GM12878 (cell line): ENCODE measurements at regions of chr2 and their contacts with region 1.

Region 1: DNA sequence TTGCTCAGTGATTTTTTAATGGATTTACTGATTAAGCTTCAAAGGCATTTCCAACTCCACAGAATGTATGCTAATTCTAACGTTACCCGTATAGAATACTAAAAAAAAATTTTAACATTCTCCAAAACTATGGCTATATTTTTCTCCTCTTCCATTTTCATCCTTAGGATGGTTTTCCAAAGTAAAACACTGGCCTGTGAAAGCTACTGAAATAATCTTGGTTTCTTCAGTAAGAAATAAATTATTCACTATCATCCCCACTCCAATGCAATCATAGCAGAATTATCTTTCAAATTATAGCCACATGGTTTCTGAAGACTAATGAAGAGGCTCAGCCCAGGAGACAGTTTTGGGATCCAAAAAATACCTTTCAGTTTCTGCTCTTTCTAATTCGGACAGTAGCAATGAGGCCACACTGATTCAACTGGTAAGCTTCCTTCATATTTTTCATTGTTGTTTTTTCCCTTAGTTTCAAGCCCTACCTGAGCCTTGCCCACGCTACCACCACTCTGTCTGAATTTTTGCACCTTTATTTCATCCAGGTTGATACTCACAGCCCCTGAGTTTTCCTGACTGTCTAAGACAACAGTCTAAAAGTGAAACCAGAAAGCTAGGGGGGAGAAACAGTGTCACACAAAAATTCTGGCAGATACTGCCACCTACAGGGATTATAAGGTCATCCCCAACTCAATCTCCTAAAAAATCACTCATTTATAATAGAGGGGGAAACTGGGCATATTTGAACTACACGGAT is 887.9 kb downstream of the NRXN1 start:
- DNase-seq: peak; percentile 24
- ATAC-seq: peak; percentile 99
- H3K4me3 ChIP-seq: peak overlapping the region; percentile 69
- H3K27ac ChIP-seq: peak overlapping the region; percentile 33; the same call in 1 of the 2 replicates
- H3K4me1 ChIP-seq: no peaks in the 10 kb centered on the region
- H3K27me3 ChIP-seq: no peaks in the 10 kb centered on the region
- CTCF ChIP-seq: peak; percentile 54 to 68 (median 55); a peak in 5 of 6 replicates
- EP300 ChIP-seq: no peak
- POLR2A ChIP-seq: no peak
- RAD21 ChIP-seq: peak; percentile 69

Region 2: GRCh38 chr2:48600204-48600813 is 1543.7 kb before region 1 on chr2:
- CTCF ChIA-PET with region 1: interaction called, 3 read pairs
- POLR2A ChIA-PET with region 1: no interaction called
- RAD21 ChIA-PET with region 1: interaction called, 3 read pairs
- SMC1A ChIA-PET with region 1: no interaction called
- in situ Hi-C with region 1: no loop called
- intact Hi-C with region 1: loop called (anchors 5 kb)
- DNase-seq: no peak
- ATAC-seq: peak; percentile 77
- H3K4me3 ChIP-seq: no peak overlapping the region
- H3K27ac ChIP-seq: no peak overlapping the region
- H3K4me1 ChIP-seq: no peaks in the 10 kb centered on the region
- H3K27me3 ChIP-seq: peaks cover 0 to 2% of the 10 kb centered on the region in 2 experiments; a peak in 1 of 4 replicates
- CTCF ChIP-seq: peak; percentile 61 to 70 (median 68)
- EP300 ChIP-seq: no peak
- POLR2A ChIP-seq: no peak
- RAD21 ChIP-seq: peak; percentile 81

Region 3: DNA sequence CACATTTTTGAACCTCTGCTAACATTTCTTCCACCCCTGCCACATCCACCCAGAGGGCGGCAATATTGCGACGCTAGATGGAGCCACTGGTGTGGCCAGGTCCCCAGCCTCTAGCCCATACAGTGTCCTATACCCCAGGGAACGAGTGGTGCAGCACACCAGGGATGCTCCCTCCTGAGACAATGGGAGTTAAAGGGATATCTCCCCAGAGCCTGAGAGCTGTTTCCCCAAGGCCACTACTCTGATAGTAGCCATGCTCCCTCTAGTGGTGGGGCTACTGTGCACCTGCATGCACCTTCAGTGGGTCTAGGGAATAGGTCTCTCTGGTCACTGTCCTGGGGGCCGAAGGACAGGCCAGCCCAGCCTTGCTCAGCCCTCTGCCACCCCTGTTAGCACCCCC is 653.3 kb before region 1 on chr2:
- CTCF ChIA-PET with region 1: interaction called, 3 read pairs
- POLR2A ChIA-PET with region 1: no interaction called
- RAD21 ChIA-PET with region 1: no interaction called
- SMC1A ChIA-PET with region 1: no interaction called
- in situ Hi-C with region 1: no loop called
- intact Hi-C with region 1: loop called (anchors 5 kb)
- DNase-seq: no peak
- ATAC-seq: peak; percentile 96
- H3K4me3 ChIP-seq: no peak overlapping the region
- H3K27ac ChIP-seq: no peak overlapping the region
- H3K4me1 ChIP-seq: no peaks in the 10 kb centered on the region
- H3K27me3 ChIP-seq: no peaks in the 10 kb centered on the region
- CTCF ChIP-seq: peak; percentile 57 to 84 (median 61)
- EP300 ChIP-seq: no peak
- POLR2A ChIP-seq: no peak
- RAD21 ChIP-seq: peak; percentile 47

Region 4: GRCh38 chr2:49687918-49688317 is 456.1 kb before region 1 on chr2:
- CTCF ChIA-PET with region 1: interaction called, 15 read pairs
- POLR2A ChIA-PET with region 1: no interaction called
- RAD21 ChIA-PET with region 1: interaction called, 9 read pairs
- SMC1A ChIA-PET with region 1: interaction called, 6 read pairs
- in situ Hi-C with region 1: no loop called
- intact Hi-C with region 1: loop called (anchors 1 kb)
- DNase-seq: no peak
- ATAC-seq: peak; percentile 50; the same call in 2 of the 3 replicates
- H3K4me3 ChIP-seq: no peak overlapping the region
- H3K27ac ChIP-seq: no peak overlapping the region
- H3K4me1 ChIP-seq: no peaks in the 10 kb centered on the region
- H3K27me3 ChIP-seq: no peaks in the 10 kb centered on the region
- CTCF ChIP-seq: peak in 2 of 3 experiments; percentile 2 to 11; a peak in 2 of 6 replicates
- EP300 ChIP-seq: no peak
- POLR2A ChIP-seq: no peak
- RAD21 ChIP-seq: no peak

Region 5: DNA sequence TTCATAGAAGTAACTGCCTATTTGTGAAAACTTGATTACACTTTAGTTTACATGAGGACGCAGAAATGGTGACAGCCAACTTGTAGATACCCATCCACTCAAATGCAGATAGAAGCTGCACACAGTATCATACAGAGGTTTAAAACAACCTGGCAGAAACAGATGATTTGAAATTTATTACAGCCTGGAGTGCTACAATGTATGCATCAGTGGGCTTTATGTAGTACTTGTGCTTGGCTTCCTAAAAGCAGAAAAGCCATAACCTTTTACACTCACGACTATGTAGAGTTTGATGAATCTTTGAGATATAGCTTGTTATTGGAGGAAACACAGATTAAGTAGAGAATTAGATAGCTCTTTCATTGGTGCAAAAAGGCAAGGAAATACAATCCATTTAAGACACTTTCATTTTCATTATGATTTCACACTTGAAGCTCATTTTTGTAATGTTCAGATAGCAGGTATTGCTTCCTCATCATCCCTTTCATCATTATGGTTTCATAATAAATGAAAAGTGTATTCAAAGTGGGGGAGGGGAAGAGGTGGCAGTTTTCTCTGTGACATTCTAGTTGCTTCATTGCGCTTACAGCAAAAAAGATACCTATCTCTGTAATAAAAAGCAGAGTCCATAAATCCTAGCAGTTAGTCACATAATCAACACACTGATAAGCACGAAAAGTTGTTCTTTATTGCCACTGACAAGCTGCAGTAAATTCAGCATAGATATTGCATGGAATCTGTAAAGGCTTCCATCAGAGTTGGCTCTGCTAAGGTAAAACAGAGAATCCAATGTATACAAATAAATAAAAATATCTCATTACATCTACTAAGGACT is 199.8 kb before region 1 on chr2:
- CTCF ChIA-PET with region 1: no interaction called
- POLR2A ChIA-PET with region 1: no interaction called
- RAD21 ChIA-PET with region 1: no interaction called
- SMC1A ChIA-PET with region 1: no interaction called
- in situ Hi-C with region 1: no loop called
- intact Hi-C with region 1: no loop called
- DNase-seq: no peak
- ATAC-seq: peak; percentile 56
- H3K4me3 ChIP-seq: no peak overlapping the region
- H3K27ac ChIP-seq: no peak overlapping the region
- H3K4me1 ChIP-seq: no peaks in the 10 kb centered on the region
- H3K27me3 ChIP-seq: no peaks in the 10 kb centered on the region
- CTCF ChIP-seq: no peak
- EP300 ChIP-seq: no peak
- POLR2A ChIP-seq: no peak
- RAD21 ChIP-seq: no peak

Region 6: GRCh38 chr2:50401772-50402653 is 258.0 kb after region 1 on chr2:
- CTCF ChIA-PET with region 1: interaction called, 11 read pairs
- POLR2A ChIA-PET with region 1: no interaction called
- RAD21 ChIA-PET with region 1: interaction called, 12 read pairs
- SMC1A ChIA-PET with region 1: interaction called, 12 read pairs
- in situ Hi-C with region 1: no loop called
- intact Hi-C with region 1: no loop called
- DNase-seq: no peak
- ATAC-seq: peak; percentile 80
- H3K4me3 ChIP-seq: no peak overlapping the region
- H3K27ac ChIP-seq: no peak overlapping the region
- H3K4me1 ChIP-seq: no peaks in the 10 kb centered on the region
- H3K27me3 ChIP-seq: no peaks in the 10 kb centered on the region
- CTCF ChIP-seq: peak; percentile 80 to 90 (median 86)
- EP300 ChIP-seq: no peak
- POLR2A ChIP-seq: no peak
- RAD21 ChIP-seq: peak; percentile 85

Region 7: DNA sequence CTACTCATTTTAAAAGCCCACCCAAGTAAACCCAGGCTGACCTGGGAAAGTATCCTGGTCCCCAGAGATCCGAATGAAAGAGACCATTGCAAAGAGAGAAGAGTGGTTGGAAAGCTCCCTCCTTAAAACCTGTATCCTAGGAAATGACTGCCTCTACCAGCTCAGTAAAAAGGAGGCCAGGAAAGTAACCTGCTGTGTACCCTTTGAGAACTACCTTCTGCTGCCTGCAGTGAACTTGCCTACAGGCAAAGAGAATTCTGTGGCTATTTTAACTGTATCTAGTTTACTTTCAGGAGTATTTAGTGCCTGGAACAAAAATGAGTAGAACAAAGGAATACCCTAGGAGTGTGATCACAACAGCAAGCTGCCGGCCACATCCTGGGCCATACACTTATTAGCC is 1529.6 kb after region 1 on chr2:
- CTCF ChIA-PET with region 1: no interaction called
- POLR2A ChIA-PET with region 1: no interaction called
- RAD21 ChIA-PET with region 1: no interaction called
- SMC1A ChIA-PET with region 1: no interaction called
- in situ Hi-C with region 1: no loop called
- intact Hi-C with region 1: no loop called
- DNase-seq: no peak
- ATAC-seq: no peak
- H3K4me3 ChIP-seq: no peak overlapping the region
- H3K27ac ChIP-seq: no peak overlapping the region
- H3K4me1 ChIP-seq: no peaks in the 10 kb centered on the region
- H3K27me3 ChIP-seq: no peaks in the 10 kb centered on the region
- CTCF ChIP-seq: no peak
- EP300 ChIP-seq: no peak
- POLR2A ChIP-seq: no peak
- RAD21 ChIP-seq: no peak